ENCODE measurements at regions of chr7 and their contacts with region 1.

Region 1: GRCh38 chr7:144037414-144038035 is 11.2 kb upstream of the OR2A5 start:
- DNase-seq: peak in 1 of 2 donors; percentile 17
- ATAC-seq: peak in 6 of 8 donors; percentile 33 to 88 (median 74)
- H3K4me3 ChIP-seq: no peak overlapping the region
- H3K27ac ChIP-seq: peak overlapping the region in 4 of 10 donors; percentile 54 to 67 (median 56)
- H3K4me1 ChIP-seq: peaks cover 0 to 23% (median 0%) of the 10 kb centered on the region in 9 donors
- H3K27me3 ChIP-seq: no peaks in the 10 kb centered on the region
- CTCF ChIP-seq: no peak

Region 2: GRCh38 chr7:143331179-143331820 is 706.2 kb before region 1 on chr7:
- intact Hi-C with region 1: no loop called
- DNase-seq: no peak
- ATAC-seq: peak in 2 of 8 donors; percentile 41 to 73
- H3K4me3 ChIP-seq: no peak overlapping the region
- H3K27ac ChIP-seq: no peak overlapping the region
- H3K4me1 ChIP-seq: peaks cover 0 to 10% (median 0%) of the 10 kb centered on the region in 9 donors
- H3K27me3 ChIP-seq: peaks cover 0 to 7% (median 0%) of the 10 kb centered on the region in 7 donors
- CTCF ChIP-seq: no peak

Region 3: GRCh38 chr7:143929224-143929920 is 108.2 kb before region 1 on chr7:
- intact Hi-C with region 1: no loop called
- DNase-seq: no peak
- ATAC-seq: peak in 1 of 8 donors; percentile 61
- H3K4me3 ChIP-seq: no peak overlapping the region
- H3K27ac ChIP-seq: no peak overlapping the region
- H3K4me1 ChIP-seq: no peaks in the 10 kb centered on the region
- H3K27me3 ChIP-seq: no peaks in the 10 kb centered on the region
- CTCF ChIP-seq: no peak

Region 4: GRCh38 chr7:144102041-144102440 is 64.5 kb after region 1 on chr7:
- intact Hi-C with region 1: loop called in 1 of 10 experiments (anchors 10 kb)
- DNase-seq: no peak
- ATAC-seq: no peak
- H3K4me3 ChIP-seq: no peak overlapping the region
- H3K27ac ChIP-seq: no peak overlapping the region
- H3K4me1 ChIP-seq: no peaks in the 10 kb centered on the region
- H3K27me3 ChIP-seq: no peaks in the 10 kb centered on the region
- CTCF ChIP-seq: no peak

Region 5: GRCh38 chr7:144127703-144128334 is 90.3 kb after region 1 on chr7:
- intact Hi-C with region 1: loop called in 2 of 10 experiments (anchors 5 to 10 kb)
- DNase-seq: peak; percentile 85
- ATAC-seq: peak in 7 of 8 donors; percentile 78 to 90 (median 80)
- H3K4me3 ChIP-seq: no peak overlapping the region
- H3K27ac ChIP-seq: no peak overlapping the region
- H3K4me1 ChIP-seq: no peaks in the 10 kb centered on the region
- H3K27me3 ChIP-seq: no peaks in the 10 kb centered on the region
- CTCF ChIP-seq: peak; percentile 67 to 86 (median 80)

Measured in heart right ventricle (tissue), 16 donors.